Posterior vena cava (tissue), 2 donors: ENCODE measurements at regions of chr5 and their contacts with region 1.

Region 1: DNA sequence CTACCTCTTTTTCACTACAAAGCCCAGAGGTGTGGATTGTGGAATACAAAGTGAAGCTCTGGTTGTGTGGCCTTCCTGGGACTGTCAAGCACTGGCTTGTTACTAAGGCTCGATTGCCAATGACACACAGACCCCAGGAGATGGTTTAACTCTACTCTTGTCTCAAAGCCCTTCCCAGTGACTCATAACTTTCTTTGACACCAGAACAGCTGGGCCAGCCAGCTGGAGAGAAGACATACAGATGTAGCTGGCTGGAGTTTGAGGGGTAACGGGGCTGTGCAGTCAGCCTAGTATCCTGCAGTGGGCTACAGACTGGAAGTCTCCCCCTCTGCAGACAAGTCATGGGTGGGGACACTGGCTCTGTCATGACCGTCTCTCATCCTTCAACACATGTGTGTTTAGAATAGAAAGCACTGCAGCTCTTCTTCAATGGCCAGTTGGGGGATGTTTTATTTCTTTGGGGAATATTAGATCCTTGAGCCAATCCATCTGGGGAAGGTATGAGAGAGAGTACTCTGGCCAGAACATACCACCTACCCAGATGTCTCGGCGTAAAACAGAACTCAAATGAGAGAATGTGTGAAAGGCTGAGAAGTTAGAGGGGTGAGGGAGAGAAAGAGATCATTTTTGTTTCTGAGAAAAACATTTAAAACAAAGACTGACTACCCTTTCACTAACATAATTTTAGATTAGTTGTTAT is 53.3 kb downstream of the SEMA6A start:
- DNase-seq: no peak

Region 2: GRCh38 chr5:116583085-116583861 is 62.0 kb after region 1 on chr5:
- intact Hi-C with region 1: no loop called
- DNase-seq: no peak

Region 3: GRCh38 chr5:118095115-118095514 is 1573.8 kb after region 1 on chr5:
- intact Hi-C with region 1: no loop called
- DNase-seq: no peak

Region 4: GRCh38 chr5:118293378-118293777 is 1772.1 kb after region 1 on chr5:
- intact Hi-C with region 1: loop called in 1 of 2 experiments (anchors 5 kb)
- DNase-seq: no peak